Heart right ventricle (tissue), 16 donors: ENCODE measurements at regions of chr13 and their contacts with region 1.

Region 1: DNA sequence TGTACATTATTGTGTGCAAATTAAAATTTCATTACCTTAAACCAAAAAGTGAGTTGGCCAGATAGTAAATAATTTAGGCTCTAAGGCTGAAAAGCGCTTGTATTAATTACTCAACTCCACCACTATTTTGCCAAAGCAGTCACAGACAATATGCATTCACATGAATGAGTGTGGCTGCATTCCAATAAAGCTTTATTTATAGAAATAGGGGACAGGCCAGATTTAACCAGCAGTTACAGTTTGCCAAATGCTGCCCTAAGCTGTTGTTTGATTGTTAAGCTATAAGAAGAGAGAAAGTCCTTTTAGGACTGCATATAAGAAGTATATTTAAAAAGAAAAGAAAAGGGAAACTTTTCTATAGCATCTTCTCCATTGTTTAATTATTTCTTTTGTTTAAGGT is 342.6 kb downstream of the ITGBL1 start:
- DNase-seq: no peak
- ATAC-seq: peak in 7 of 8 donors; percentile 33 to 85 (median 65)
- H3K4me3 ChIP-seq: no peak overlapping the region
- H3K27ac ChIP-seq: peak overlapping the region in 4 of 10 donors; percentile 10 to 34 (median 30)
- H3K4me1 ChIP-seq: peaks cover 0 to 13% (median 0%) of the 10 kb centered on the region in 9 donors
- H3K27me3 ChIP-seq: no peaks in the 10 kb centered on the region
- CTCF ChIP-seq: no peak

Region 2: GRCh38 chr13:101869553-101869952 is 74.5 kb after region 1 on chr13:
- intact Hi-C with region 1: loop called in 2 of 10 experiments (anchors 5 to 10 kb)
- DNase-seq: no peak
- ATAC-seq: no peak
- H3K4me3 ChIP-seq: no peak overlapping the region
- H3K27ac ChIP-seq: peak overlapping the region in 9 of 10 donors; percentile 37 to 90 (median 77)
- H3K4me1 ChIP-seq: peaks cover 0 to 7% (median 0%) of the 10 kb centered on the region in 9 donors
- H3K27me3 ChIP-seq: no peaks in the 10 kb centered on the region
- CTCF ChIP-seq: no peak

Region 3: GRCh38 chr13:101916108-101916757 is 121.2 kb after region 1 on chr13:
- intact Hi-C with region 1: loop called in 1 of 10 experiments (anchors 10 kb)
- DNase-seq: peak in 1 of 2 donors; percentile 40
- ATAC-seq: peak; percentile 25 to 92 (median 80)
- H3K4me3 ChIP-seq: peak overlapping the region; percentile 13 to 57 (median 48)
- H3K27ac ChIP-seq: no peak overlapping the region
- H3K4me1 ChIP-seq: peaks cover 0 to 20% (median 6%) of the 10 kb centered on the region in 9 donors
- H3K27me3 ChIP-seq: peaks cover 0 to 87% (median 68%) of the 10 kb centered on the region in 7 donors
- CTCF ChIP-seq: peak in 7 of 9 donors; percentile 29 to 60 (median 51)

Region 4: GRCh38 chr13:102376318-102376717 is 581.3 kb after region 1 on chr13:
- intact Hi-C with region 1: loop called in 1 of 10 experiments (anchors 5 kb)
- DNase-seq: no peak
- ATAC-seq: no peak
- H3K4me3 ChIP-seq: no peak overlapping the region
- H3K27ac ChIP-seq: no peak overlapping the region
- H3K4me1 ChIP-seq: no peaks in the 10 kb centered on the region
- H3K27me3 ChIP-seq: no peaks in the 10 kb centered on the region
- CTCF ChIP-seq: no peak